Naive thymus-derived CD4-positive, alpha-beta T cell (primary cell): ENCODE measurements at regions of chr21 and their contacts with region 1.

Region 1: DNA sequence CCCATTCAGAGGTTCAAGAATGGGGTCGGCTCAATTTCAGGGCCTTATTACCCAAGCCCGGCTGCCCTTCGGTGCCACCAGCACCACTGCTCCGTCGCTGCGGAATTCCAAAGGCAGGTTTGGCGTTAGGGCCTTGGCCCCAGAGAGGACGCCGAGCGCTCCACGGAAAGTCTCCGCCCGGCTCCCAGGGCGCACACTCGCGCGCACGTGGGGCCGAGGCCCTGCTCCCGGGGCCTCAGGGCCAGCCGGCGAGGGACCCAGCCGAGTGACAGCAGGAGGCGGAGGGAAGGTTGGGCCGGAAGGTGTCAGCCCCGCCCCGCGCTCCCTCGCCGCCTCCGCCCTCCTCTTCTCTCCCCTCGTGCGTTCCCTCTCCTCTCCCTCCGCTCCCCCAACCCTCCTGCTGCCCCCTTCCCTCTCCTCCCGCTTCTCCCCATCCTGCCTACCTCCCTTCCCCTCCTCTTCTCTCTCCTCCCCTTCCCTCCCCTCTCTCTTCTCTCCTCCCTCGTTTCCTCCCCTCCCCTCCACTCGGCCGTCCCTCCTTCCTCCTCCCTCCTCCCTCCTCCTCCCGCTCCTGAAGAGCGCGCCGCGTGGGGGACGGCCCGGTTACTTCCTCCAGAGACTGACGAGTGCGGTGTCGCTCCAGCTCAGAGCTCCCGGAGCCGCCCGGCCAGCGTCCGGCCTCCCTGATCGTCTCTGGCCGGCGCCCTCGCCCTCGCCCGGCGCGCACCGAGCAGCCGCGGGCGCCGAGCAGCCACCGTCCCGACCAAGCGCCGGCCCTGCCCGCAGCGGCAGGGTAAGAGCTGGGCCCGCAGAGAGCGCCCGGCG is at the start of gene ETS2:
- DNase-seq: peak; percentile 40 to 79 (median 62)
- ATAC-seq: peak; percentile 85
- H3K4me3 ChIP-seq: peak within 1 kb of the TSS; percentile 81
- H3K4me3 Mint-ChIP-seq: peak within 1 kb of the TSS; percentile 85 to 97 (median 92)
- H3K27ac ChIP-seq: peak within 1 kb of the TSS; percentile 70
- H3K27ac Mint-ChIP-seq: peak within 1 kb of the TSS; percentile 76 to 95 (median 86)
- H3K4me1 ChIP-seq: peaks cover 3 to 9% of the 10 kb centered on the region in 2 donors
- H3K4me1 Mint-ChIP-seq: peaks cover 12 to 39% (median 30%) of the 10 kb centered on the region in 7 donors
- H3K27me3 ChIP-seq: no peaks in the 10 kb centered on the region
- H3K27me3 Mint-ChIP-seq: peaks cover 0 to 4% (median 0%) of the 10 kb centered on the region in 5 donors
- total RNA-seq, gene ETS2: 15.6 to 61.1 (median 20.9) TPM

Region 2: GRCh38 chr21:37072988-37073416 is 1732.5 kb before region 1 on chr21 and contains the starts of genes PIGP and TTC3:
- CTCF ChIA-PET with region 1: no interaction called
- POLR2A ChIA-PET with region 1: no interaction called
- intact Hi-C with region 1: loop called in 1 of 2 experiments (anchors 5 kb)
- DNase-seq: peak; percentile 93 to 99 (median 97)
- ATAC-seq: peak; percentile 79
- H3K4me3 ChIP-seq: peak within 1 kb of the TSS; percentile 76
- H3K4me3 Mint-ChIP-seq: peak within 1 kb of the TSS; percentile 88 to 100 (median 98)
- H3K27ac ChIP-seq: peak within 1 kb of the TSS; percentile 97
- H3K27ac Mint-ChIP-seq: peak within 1 kb of the TSS; percentile 91 to 100 (median 97)
- H3K4me1 ChIP-seq: peaks cover 22 to 23% of the 10 kb centered on the region in 2 donors
- H3K4me1 Mint-ChIP-seq: peaks cover 30 to 66% (median 59%) of the 10 kb centered on the region in 7 donors
- H3K27me3 ChIP-seq: no peaks in the 10 kb centered on the region
- H3K27me3 Mint-ChIP-seq: peaks cover 0 to 6% (median 0%) of the 10 kb centered on the region in 5 donors
- total RNA-seq, gene PIGP: 9.1 to 26.7 (median 15.3) TPM
- total RNA-seq, gene TTC3: 66.6 to 208 (median 154) TPM

Region 3: GRCh38 chr21:38766987-38767722 is 38.4 kb before region 1 on chr21:
- CTCF ChIA-PET with region 1: interaction called, 9 read pairs
- POLR2A ChIA-PET with region 1: interaction called, 7 read pairs
- intact Hi-C with region 1: loop called (anchors 1 kb)
- DNase-seq: peak; percentile 21 to 85 (median 77)
- ATAC-seq: peak; percentile 93
- H3K4me3 ChIP-seq: peak overlapping the region; percentile 74
- H3K4me3 Mint-ChIP-seq: peak overlapping the region; percentile 76 to 98 (median 90)
- H3K27ac ChIP-seq: peak overlapping the region; percentile 67
- H3K27ac Mint-ChIP-seq: peak overlapping the region; percentile 93 to 99 (median 95)
- H3K4me1 ChIP-seq: peaks cover 24% of the 10 kb centered on the region in 2 donors
- H3K4me1 Mint-ChIP-seq: peaks cover 15 to 45% (median 35%) of the 10 kb centered on the region in 7 donors
- H3K27me3 ChIP-seq: no peaks in the 10 kb centered on the region
- H3K27me3 Mint-ChIP-seq: no peaks in the 10 kb centered on the region

Region 4: DNA sequence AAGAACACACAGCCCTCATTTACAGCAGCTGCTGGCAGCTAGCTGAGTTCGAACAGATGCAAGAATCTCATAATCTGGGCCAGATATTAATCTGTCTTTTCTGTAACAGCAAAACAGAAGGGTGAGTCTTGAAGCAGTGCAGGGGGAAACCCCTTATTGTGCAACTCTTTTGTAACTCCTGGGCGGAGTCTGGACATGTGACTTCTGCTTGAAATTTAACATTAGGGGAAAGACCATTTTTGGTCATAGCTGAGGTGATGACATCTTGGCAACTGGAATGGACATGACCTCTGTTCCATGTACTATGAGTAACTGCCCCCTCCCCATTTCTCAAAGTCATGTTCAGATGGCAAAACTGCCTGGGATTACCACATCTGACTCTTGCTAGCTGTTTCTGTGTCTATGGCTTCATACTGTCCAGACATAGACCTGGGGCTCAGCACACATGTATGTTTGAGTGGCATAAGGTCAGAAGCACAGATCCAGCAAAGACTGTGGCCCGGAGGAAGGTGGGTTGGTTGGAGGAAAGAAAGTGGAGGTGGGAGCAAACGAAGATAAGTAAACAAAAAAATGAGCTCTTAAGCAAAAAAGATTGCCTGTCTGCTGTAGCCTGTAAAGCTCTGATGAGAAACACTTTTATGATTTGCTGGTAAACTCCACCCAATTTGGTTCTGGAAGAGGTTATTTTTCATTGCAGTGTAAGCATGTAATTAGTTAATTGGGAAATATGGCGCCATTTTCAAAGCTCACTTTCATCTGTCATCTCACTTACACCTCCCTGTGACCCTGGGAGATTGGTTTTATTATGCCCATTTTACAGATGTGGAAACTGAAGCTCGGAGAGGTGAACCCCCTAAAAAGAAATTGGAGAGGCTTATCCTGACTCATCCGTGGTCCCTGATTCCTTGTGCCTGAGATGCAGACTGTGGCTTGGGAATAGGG is 26.3 kb after region 1 on chr21:
- CTCF ChIA-PET with region 1: no interaction called
- POLR2A ChIA-PET with region 1: no interaction called
- intact Hi-C with region 1: loop called in 1 of 2 experiments (anchors 1 kb)
- DNase-seq: peak in 6 of 9 donors; percentile 14 to 52 (median 31)
- ATAC-seq: peak; percentile 90
- H3K4me3 ChIP-seq: no peak overlapping the region
- H3K4me3 Mint-ChIP-seq: peak overlapping the region in 1 of 10 donors; percentile 11
- H3K27ac ChIP-seq: no peak overlapping the region
- H3K27ac Mint-ChIP-seq: peak overlapping the region in 3 of 9 donors; percentile 24 to 28 (median 24)
- H3K4me1 ChIP-seq: no peaks in the 10 kb centered on the region
- H3K4me1 Mint-ChIP-seq: peaks cover 11 to 17% (median 13%) of the 10 kb centered on the region in 7 donors
- H3K27me3 ChIP-seq: no peaks in the 10 kb centered on the region
- H3K27me3 Mint-ChIP-seq: peaks cover 0 to 7% (median 4%) of the 10 kb centered on the region in 5 donors

Region 5: DNA sequence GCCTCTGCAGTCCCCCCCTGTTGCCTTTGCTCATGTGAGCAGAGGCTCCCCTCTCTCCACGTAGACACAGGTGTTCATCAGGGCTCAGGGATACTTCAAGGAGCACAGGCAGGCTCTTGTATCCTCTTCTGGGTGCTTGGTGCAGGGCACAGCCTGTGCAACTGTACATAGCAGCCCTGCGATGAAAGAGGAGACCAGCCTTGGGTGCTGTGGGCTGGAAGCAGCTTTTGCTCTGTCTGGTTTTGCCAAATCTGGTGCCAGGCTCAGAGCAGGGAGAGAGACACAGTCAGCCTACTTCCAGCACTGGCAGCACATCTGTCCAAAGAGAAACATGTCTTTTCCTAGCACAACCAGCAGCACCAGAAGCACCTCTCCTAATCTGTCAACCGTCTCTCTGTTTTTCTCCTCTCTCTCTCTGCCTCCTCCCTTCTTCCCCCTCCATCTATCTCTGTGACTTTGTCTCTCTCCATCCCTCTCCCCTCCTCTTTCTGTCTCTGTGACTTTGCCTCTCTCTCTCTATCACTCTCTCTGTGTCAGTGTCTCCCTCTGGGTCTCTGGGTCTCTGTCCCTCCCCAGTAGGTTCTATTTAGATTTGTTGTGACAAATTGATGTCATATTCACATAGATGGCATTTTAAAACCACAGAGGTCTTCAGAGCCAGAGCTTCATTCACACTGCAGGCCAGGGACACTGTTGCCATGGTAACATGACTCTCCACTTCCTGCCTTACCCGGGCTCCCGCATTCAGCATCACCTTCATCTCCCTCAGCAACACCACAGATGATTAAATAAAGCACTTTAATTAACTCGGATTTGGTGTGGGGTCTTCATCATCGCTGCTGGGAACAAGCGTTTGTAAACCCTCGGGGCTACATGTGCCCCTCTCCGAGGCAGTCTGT is 132.6 kb after region 1 on chr21:
- CTCF ChIA-PET with region 1: no interaction called
- POLR2A ChIA-PET with region 1: no interaction called
- intact Hi-C with region 1: no loop called
- DNase-seq: peak in 6 of 9 donors; percentile 3 to 42 (median 16)
- ATAC-seq: peak; percentile 65
- H3K4me3 ChIP-seq: no peak overlapping the region
- H3K4me3 Mint-ChIP-seq: peak overlapping the region in 1 of 10 donors; percentile 37
- H3K27ac ChIP-seq: no peak overlapping the region
- H3K27ac Mint-ChIP-seq: peak overlapping the region in 1 of 9 donors; percentile 87
- H3K4me1 ChIP-seq: no peaks in the 10 kb centered on the region
- H3K4me1 Mint-ChIP-seq: peaks cover 0 to 22% (median 8%) of the 10 kb centered on the region in 7 donors
- H3K27me3 ChIP-seq: no peaks in the 10 kb centered on the region
- H3K27me3 Mint-ChIP-seq: peaks cover 0 to 5% (median 0%) of the 10 kb centered on the region in 5 donors

Region 6: DNA sequence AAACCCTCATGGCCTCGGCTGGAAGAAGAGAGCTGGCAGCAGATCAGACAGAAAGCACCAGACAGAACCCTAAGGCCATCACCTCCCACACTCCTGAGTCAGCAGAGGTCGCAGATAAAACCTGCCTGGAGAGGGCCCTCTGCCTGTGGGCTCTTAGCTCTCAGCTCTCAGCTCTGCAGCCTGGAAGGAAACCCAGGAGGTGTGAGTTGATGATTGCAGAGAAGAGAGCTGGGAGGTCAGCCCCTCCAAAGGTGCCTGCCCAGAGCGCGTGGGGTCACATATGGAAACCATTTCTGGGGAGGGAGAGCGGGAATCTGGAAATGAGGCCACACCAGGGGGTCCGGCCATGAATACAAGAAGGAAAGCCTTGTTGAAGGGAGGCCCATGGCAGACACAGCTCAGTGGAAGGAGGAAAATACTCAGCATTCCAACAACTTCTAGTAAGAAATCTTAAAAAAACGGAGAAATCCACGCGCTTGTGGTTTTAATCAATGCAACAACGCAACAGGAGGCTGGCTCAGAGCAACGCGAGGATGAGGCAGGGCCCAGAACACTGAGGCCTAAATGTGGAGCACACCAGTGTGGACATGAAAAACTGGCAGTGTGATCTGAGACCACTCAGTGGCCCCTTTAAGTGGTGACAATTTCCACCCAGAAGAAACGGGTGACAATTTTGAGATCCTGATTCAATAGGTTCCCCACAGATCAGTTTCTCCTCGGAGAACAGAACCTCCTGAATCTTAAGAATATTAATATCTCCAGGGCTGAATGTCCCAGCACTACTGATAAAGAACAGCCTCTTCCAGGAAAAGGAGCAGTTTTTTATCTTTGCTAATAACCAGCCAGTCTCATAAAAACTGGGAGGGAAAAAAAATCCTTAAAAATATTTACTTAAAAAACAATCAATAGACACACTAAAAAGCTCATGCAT is 332.0 kb after region 1 on chr21:
- CTCF ChIA-PET with region 1: no interaction called
- POLR2A ChIA-PET with region 1: no interaction called
- intact Hi-C with region 1: loop called in 1 of 2 experiments (anchors 1 kb)
- DNase-seq: no peak
- ATAC-seq: no peak
- H3K4me3 ChIP-seq: no peak overlapping the region
- H3K4me3 Mint-ChIP-seq: no peak overlapping the region
- H3K27ac ChIP-seq: no peak overlapping the region
- H3K27ac Mint-ChIP-seq: no peak overlapping the region
- H3K4me1 ChIP-seq: no peaks in the 10 kb centered on the region
- H3K4me1 Mint-ChIP-seq: no peaks in the 10 kb centered on the region
- H3K27me3 ChIP-seq: no peaks in the 10 kb centered on the region
- H3K27me3 Mint-ChIP-seq: peaks cover 0 to 4% (median 0%) of the 10 kb centered on the region in 5 donors

Region 7: GRCh38 chr21:39379986-39380891 is 574.7 kb after region 1 on chr21:
- CTCF ChIA-PET with region 1: no interaction called
- POLR2A ChIA-PET with region 1: no interaction called
- intact Hi-C with region 1: loop called in 1 of 2 experiments (anchors 1 kb)
- DNase-seq: peak; percentile 76 to 91 (median 83)
- ATAC-seq: peak; percentile 99
- H3K4me3 ChIP-seq: peak overlapping the region; percentile 95
- H3K4me3 Mint-ChIP-seq: peak overlapping the region; percentile 88 to 95 (median 92)
- H3K27ac ChIP-seq: peak overlapping the region; percentile 84
- H3K27ac Mint-ChIP-seq: peak overlapping the region; percentile 33 to 95 (median 93)
- H3K4me1 ChIP-seq: peaks cover 7 to 10% of the 10 kb centered on the region in 2 donors
- H3K4me1 Mint-ChIP-seq: peaks cover 8 to 31% (median 24%) of the 10 kb centered on the region in 7 donors
- H3K27me3 ChIP-seq: no peaks in the 10 kb centered on the region
- H3K27me3 Mint-ChIP-seq: peaks cover 0 to 5% (median 4%) of the 10 kb centered on the region in 5 donors

Region 8: DNA sequence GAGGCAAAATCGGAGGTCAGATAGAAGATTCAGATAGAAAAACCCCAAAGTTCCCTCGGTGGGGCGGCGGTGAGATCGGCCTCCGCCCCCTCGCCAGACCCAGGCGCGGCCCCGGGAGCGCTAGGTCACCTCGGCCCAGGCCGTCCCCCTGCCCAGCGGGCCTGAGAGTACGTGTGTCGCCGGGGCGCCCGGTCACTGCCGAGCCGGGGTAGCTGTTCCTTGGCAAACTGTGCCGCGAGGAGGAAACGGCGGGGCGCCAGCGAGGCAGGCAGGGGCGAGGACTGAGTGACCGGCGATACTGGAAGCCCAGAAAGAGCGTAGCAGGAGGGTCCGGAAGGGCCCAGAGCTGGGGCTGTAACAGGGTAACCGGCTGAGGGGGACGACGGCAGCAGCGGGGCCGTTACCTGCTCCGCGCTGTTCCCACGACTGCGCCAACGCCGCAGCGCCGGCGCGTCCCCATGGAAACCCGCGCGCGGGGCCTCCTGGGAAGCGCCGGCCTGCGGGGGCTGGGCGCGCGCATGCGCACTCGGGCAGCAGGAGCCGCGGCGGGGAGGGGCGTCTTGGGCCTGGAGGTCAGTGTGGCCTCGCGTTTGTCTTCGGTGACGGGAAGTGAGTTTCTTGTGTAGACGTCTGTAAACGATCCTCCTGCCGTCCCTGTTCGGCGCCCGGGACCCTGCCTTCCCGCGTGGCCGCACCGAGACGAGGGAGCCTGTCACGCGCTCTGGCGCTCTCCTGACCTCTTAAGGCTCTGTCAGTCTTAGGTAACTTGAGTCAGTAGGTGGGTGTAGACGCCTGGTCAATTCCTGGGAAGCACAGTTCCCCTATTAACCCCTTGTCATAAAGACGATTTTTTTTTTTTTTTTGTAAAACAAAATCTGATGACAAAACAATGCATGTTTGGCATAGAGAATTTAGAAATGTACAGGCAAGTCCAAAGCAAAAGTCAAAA is 640.1 kb after region 1 on chr21 and contains the start of gene LCA5L:
- CTCF ChIA-PET with region 1: no interaction called
- POLR2A ChIA-PET with region 1: interaction called, 4 read pairs
- intact Hi-C with region 1: loop called in 1 of 2 experiments (anchors 2 kb)
- DNase-seq: peak; percentile 80 to 96 (median 90)
- ATAC-seq: peak; percentile 93
- H3K4me3 ChIP-seq: peak within 1 kb of the TSS; percentile 83
- H3K4me3 Mint-ChIP-seq: peak within 1 kb of the TSS; percentile 91 to 99 (median 94)
- H3K27ac ChIP-seq: peak within 1 kb of the TSS; percentile 76
- H3K27ac Mint-ChIP-seq: peak within 1 kb of the TSS; percentile 86 to 98 (median 94)
- H3K4me1 ChIP-seq: peaks cover 11 to 13% of the 10 kb centered on the region in 2 donors
- H3K4me1 Mint-ChIP-seq: peaks cover 8 to 26% (median 14%) of the 10 kb centered on the region in 7 donors
- H3K27me3 ChIP-seq: peaks cover 0 to 2% of the 10 kb centered on the region in 2 donors
- H3K27me3 Mint-ChIP-seq: peaks cover 0 to 44% (median 14%) of the 10 kb centered on the region in 5 donors
- total RNA-seq, gene LCA5L: not detected